ENCODE measurements at regions of chr19 and their contacts with region 1.

Region 1: GRCh38 chr19:43784981-43785808 is 4.4 kb upstream of the KCNN4 start:
- DNase-seq: peak in 3 of 10 donors; percentile 14 to 90 (median 42)

Region 2: DNA sequence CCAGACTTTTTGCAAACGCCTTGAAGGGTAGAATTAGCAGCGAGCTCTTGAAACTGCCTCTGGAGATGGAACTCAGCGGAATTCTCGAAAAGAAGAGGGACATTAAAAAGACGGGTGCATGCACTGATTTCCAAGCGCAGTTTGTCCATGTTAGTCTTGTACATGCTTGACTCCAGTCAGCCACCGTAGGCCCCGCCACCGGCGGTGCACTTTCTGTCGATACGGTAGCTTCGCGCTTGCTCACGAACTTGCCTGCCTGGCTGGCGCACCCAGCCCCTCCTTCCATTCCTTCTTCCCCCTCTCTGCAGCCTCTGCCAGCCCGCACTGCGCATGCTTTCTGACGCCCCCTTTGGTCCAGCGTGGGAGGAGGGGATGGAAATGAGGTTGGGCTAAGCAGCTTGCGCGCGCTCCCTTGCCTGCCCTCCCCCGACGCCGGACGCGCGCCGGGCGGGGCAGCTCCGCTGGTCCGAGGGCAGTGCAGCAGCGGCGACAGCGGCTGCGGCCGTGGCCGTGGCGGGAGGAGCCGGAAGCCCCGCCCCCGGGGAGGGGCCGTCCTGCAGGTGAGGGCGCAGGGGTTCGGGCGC is 252.1 kb before region 1 on chr19 and contains the start of gene ZNF575:
- intact Hi-C with region 1: loop called (anchors 10 kb)
- DNase-seq: peak; percentile 83 to 99 (median 92)

Region 3: DNA sequence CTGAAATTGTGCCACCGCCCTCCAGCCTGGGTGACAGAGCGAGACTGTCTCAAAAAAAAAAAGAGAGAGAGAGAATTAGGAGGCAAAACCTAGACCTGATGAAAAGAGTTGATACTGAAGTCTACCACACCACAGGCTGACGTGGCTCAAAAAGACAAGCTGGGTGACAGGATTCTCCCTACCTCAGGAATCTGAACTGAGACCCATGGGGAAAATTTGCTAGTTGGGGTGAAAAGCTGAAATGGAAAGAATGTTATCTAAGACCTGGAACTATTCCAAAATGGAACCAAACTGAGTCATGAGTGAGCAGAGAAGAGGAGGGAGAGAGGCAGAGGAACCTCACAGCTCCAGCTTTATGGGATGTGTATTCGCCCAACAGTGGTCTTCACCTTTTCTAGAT is 42.2 kb before region 1 on chr19:
- intact Hi-C with region 1: loop called (anchors 1 kb)
- DNase-seq: peak in 1 of 10 donors; percentile 1

Region 4: DNA sequence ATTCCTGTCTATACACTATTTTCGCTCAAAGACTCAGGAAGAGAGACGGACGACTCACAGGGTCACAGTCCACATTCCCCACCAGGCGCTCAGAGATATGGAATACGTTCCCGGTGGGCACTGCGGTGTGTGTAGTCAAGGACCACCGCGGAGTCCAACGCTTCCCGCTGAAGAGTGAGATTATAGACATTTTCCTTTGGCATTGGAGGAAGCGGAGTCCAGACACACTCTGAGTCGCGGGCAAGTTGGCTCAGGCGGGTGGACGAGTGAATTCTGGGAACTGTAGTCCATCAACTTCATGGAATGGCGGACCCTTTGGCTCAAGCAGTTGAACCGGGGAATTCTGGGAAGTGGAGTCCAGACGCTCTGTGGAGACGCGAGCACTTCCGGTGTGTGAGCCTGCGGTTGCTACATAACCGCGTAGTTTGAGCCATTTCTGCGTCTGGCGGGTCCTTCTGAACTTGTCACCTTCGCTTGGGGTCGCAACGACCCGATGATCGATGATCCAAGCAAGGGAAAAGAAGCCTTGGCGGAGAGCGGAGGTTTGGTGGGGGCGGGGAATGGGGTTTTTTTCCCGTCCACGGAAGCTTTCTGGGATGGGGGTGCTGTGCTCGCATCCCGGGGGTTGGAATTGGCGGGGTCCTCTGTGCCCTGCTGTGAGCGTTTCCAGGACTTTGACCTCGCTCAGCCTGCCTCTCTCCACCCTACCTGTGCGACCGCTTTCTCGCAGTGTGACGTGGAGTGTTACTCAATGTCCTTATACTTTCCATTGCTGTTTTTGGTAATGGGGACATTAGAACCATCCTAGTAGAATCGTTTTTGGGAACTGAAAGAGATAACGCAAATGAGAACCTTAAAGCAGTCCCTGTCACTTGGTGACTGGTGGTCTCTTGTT is 217.6 kb after region 1 on chr19 and contains the start of gene ZNF230:
- intact Hi-C with region 1: no loop called
- DNase-seq: peak; percentile 84 to 98 (median 92)

Measured in posterior cingulate gyrus (tissue), 11 donors.